ENCODE measurements at regions of chr3 and their contacts with region 1.

Region 1: DNA sequence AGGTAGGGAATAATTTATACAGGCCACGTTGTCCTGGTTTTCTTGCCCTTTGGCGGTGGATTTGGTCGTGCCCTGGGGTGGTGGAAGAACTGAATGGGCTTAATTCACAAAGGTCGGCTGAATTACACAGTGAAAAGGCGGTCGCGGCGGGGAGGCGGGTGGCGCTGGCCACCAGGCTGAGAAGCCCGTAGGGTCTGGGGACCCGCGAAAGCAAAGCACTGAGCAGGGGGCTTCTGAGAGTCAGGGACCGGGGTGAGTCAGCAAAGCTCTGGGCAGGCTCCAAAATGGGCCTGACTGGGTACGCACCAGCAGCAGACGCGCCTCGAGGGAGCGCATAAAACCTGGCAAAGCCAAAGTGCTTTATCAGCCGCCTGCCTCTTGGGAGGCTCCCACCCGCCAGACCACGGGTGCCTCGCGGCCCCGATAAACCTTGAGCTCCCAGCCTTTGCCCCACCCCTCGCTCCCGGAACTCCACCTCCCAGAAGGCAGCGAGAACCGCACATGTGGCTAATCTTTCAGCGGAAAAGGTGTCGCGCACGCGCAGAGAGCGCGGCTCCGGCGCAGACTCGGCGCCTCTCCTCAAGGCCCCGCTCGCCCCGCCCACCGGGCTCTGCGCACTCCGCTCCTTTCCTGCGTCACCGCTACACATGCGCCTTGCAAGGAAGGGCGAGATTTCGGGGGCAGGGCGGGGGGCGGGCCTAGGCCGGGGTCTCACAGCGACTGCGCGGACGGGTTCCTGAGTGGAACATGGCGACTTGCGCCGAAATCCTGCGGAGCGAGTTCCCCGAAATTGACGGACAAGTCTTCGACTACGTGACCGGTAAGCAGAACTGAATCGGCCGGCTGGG is at the start of gene ABCF3:
- DNase-seq: peak; percentile 99
- ATAC-seq: peak; percentile 95
- H3K4me3 Mint-ChIP-seq: peak within 1 kb of the TSS; percentile 99
- H3K27ac Mint-ChIP-seq: peak within 1 kb of the TSS; percentile 93
- H3K4me1 Mint-ChIP-seq: peaks cover 40% of the 10 kb centered on the region
- H3K27me3 Mint-ChIP-seq: no peaks in the 10 kb centered on the region
- CTCF ChIP-seq: no peak
- total RNA-seq, gene ABCF3: 78.0 and 86.7 TPM in 2 replicates

Region 2: DNA sequence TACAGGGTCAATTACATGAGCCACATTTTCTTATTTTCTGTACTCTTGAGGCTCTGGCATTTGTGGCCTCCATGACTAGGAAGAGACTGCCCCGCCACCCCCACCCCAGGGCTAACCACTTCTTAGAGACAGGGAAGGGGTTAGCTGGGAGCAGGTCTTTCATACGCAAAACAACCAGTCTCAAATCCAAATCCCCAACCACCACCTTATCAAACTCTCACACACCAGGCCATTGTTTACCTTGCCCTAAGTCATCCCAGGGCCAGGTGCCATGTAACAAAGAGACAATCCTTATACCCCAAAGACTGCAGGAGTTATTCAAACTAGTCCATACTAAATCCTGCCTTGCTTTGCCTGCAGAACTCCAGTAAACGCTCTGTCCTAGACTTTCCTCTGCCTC is 854.8 kb before region 1 on chr3:
- CTCF ChIA-PET with region 1: no interaction called
- POLR2A ChIA-PET with region 1: no interaction called
- intact Hi-C with region 1: no loop called
- DNase-seq: no peak
- ATAC-seq: no peak
- H3K4me3 Mint-ChIP-seq: no peak overlapping the region
- H3K27ac Mint-ChIP-seq: no peak overlapping the region
- H3K4me1 Mint-ChIP-seq: no peaks in the 10 kb centered on the region
- H3K27me3 Mint-ChIP-seq: peaks cover 8% of the 10 kb centered on the region
- CTCF ChIP-seq: no peak

Region 3: DNA sequence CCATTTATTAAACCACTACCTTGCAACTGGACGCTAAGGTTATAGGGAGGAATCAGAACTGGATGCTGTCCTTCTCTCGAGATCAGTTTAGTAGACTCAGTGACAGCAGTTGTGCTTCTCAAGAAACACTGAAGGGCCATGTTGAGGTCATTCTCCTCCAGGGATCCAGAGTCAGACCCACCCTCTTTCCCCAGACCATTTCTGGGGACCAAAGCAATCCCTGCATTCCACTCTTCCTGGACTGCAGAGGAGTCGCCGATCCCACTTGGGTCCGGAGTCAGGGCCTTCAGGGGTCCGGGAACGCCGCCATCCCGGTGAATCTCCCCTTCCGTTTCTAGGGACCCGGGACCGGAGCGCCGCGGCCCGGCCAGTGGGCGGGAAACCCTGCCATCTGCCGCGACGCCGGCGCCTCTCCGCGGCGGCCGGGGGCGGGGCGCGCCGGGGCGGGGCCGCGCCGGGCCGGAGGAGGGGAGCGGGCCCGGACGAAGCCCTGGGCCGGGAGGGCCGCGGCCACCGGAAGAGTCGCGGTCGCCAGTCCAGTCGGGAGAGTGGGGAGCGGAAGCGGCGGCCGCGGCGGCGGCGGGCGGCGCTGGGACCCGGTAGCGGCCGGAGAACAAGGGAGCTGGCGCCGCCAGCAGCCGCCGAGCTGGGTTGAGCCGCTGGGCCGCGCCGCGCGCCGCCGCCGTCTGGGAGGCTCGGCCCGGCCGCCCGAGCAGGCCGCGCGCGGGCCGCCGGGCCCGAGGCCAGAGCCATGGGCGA is 30.6 kb before region 1 on chr3 and contains the start of gene DVL3:
- CTCF ChIA-PET with region 1: interaction called, 3 read pairs
- POLR2A ChIA-PET with region 1: interaction called, 5 read pairs
- intact Hi-C with region 1: loop called (anchors 1 kb)
- DNase-seq: peak; percentile 70
- ATAC-seq: peak; percentile 80
- H3K4me3 Mint-ChIP-seq: peak within 1 kb of the TSS; percentile 91
- H3K27ac Mint-ChIP-seq: peak within 1 kb of the TSS; percentile 77
- H3K4me1 Mint-ChIP-seq: peaks cover 25% of the 10 kb centered on the region
- H3K27me3 Mint-ChIP-seq: no peaks in the 10 kb centered on the region
- CTCF ChIP-seq: no peak
- total RNA-seq, gene DVL3: 52.1 and 54.2 TPM in 2 replicates

Region 4: GRCh38 chr3:184196536-184196935 is 10.9 kb after region 1 on chr3:
- CTCF ChIA-PET with region 1: no interaction called
- POLR2A ChIA-PET with region 1: interaction called, 18 read pairs
- intact Hi-C with region 1: no loop called
- DNase-seq: no peak
- ATAC-seq: no peak
- H3K4me3 Mint-ChIP-seq: no peak overlapping the region
- H3K27ac Mint-ChIP-seq: no peak overlapping the region
- H3K4me1 Mint-ChIP-seq: no peaks in the 10 kb centered on the region
- H3K27me3 Mint-ChIP-seq: no peaks in the 10 kb centered on the region
- CTCF ChIP-seq: no peak

Region 5: DNA sequence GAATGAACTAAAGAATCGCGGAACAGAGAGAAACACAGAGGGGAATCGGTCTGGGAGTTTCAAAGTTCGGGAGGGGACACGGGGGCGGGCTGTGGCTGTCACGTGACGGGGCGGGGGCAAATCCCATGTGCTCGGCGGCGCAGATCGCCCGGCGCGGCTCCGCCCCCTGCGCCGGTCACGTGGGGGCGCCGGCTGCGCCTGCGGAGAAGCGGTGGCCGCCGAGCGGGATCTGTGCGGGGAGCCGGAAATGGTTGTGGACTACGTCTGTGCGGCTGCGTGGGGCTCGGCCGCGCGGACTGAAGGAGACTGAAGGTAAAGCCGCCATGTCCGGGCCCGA is 128.6 kb after region 1 on chr3 and contains the start of gene EIF4G1:
- CTCF ChIA-PET with region 1: no interaction called
- POLR2A ChIA-PET with region 1: no interaction called
- intact Hi-C with region 1: loop called (anchors 1 kb)
- DNase-seq: peak; percentile 92
- ATAC-seq: peak; percentile 86
- H3K4me3 Mint-ChIP-seq: peak within 1 kb of the TSS; percentile 86
- H3K27ac Mint-ChIP-seq: peak within 1 kb of the TSS; percentile 88
- H3K4me1 Mint-ChIP-seq: peaks cover 28% of the 10 kb centered on the region
- H3K27me3 Mint-ChIP-seq: no peaks in the 10 kb centered on the region
- CTCF ChIP-seq: no peak
- total RNA-seq, gene EIF4G1: 292 and 319 TPM in 2 replicates

Measured in activated B cell treated with CpG ODN at 0.5 μM for 24 hours (primary cell).